ENCODE measurements at regions of chr9 and their contacts with region 1.

Region 1: DNA sequence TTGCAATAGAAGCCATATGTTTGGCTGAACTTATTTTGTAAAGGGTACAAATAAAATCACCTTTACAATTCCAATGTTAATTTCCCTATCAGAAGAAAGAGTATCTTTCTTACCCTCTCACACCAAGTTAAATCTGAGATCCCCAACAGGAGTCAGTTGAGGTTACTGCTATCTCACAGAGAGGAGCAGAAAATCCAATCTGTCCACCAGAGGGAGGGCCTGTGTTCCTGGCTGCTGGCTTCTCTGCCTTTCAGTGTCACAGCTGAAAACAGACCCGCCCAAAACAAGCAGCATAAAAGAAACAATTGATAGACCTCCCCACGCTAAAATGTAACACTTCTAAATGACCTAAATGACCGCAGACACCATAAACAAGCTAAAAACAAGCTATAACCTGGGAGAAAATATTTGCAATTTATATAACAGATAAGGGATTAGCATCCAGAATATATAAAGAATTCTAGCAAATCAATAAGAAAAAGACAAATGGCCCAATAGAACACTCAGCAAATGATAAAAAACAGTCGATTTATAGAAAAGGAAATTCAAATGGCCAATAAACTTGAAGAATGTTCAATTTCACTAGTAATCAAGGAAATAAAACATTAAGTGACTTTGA is 24.5 kb upstream of the MVB12B start:
- DNase-seq: peak; percentile 51
- CTCF ChIP-seq: peak; percentile 29

Region 2: GRCh38 chr9:126490871-126491567 is 188.9 kb after region 1 on chr9:
- in situ Hi-C with region 1: loop called (anchors 25 kb)
- DNase-seq: peak; percentile 77
- CTCF ChIP-seq: peak; percentile 85

Region 3: DNA sequence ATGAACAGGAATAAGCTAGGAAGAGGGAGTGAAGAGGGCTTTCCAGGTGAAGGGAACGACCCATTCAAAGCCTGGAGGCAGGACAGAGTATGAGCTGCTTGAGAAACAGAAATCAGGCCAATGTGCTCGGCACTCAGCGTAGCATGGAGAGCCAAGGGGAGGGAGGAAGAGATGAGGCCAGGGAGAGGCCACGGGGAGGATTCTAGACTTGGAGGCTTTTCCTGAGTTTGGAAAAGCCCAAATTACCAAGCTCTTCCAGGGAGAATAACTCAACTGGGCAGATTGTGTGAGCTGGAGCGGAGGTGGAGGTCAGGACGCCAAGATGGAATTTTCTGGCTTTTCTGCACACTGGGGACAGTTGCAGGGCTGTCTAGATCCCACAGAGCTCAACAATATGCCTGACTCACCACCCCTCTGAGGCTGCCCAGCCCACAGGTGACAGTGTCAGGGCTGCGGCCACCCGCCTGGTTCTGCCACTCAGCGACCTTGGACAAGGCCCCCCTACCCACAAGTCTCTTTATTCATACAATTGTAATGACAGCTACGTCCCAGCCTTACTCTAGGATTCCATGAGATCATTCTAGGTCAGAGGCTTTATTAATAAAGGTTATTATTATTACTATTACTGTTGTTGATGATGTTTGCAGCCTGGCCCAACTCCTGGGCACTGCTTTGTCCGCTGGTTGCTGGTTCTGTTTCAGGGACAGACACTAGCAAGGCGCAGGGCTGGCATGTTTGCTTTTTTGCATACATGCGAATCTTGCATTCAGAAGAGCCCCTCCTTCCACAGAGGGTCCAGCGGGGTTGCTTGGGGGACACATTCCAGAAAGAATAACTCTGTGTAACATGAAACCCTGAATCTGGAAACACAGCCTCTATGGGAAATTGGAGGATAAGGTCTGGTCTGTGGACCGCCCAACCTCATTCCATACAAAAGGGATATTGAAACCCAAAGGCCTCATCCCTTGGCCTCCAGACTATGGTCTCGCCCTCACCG is 302.3 kb after region 1 on chr9:
- in situ Hi-C with region 1: no loop called
- DNase-seq: no peak
- CTCF ChIP-seq: no peak